Activated CD4-positive, alpha-beta memory T cell treated with anti-CD3 and anti-CD28 coated beads, Interleukin-2, amount 10 ng/mL, durations not matched to agents 7 days and 5 days (primary cell): ENCODE measurements at regions of chr22 and their contacts with region 1.

Region 1: GRCh38 chr22:42614312-42615091 is at the start of gene POLDIP3:
- DNase-seq: peak; percentile 99
- H3K4me3 Mint-ChIP-seq: peak within 1 kb of the TSS; percentile 92
- H3K27ac Mint-ChIP-seq: peak within 1 kb of the TSS; percentile 98
- H3K4me1 Mint-ChIP-seq: peaks cover 56% of the 10 kb centered on the region
- H3K27me3 Mint-ChIP-seq: no peaks in the 10 kb centered on the region
- total RNA-seq, gene POLDIP3: 71.4 to 74.7 TPM

Region 2: GRCh38 chr22:42533638-42533977 is 80.9 kb before region 1 on chr22:
- CTCF ChIA-PET with region 1: no interaction called
- POLR2A ChIA-PET with region 1: interaction called, 14 read pairs
- DNase-seq: no peak
- H3K4me3 Mint-ChIP-seq: peak overlapping the region; percentile 77
- H3K27ac Mint-ChIP-seq: peak overlapping the region; percentile 93
- H3K4me1 Mint-ChIP-seq: peaks cover 42% of the 10 kb centered on the region
- H3K27me3 Mint-ChIP-seq: peaks cover 1% of the 10 kb centered on the region

Region 3: DNA sequence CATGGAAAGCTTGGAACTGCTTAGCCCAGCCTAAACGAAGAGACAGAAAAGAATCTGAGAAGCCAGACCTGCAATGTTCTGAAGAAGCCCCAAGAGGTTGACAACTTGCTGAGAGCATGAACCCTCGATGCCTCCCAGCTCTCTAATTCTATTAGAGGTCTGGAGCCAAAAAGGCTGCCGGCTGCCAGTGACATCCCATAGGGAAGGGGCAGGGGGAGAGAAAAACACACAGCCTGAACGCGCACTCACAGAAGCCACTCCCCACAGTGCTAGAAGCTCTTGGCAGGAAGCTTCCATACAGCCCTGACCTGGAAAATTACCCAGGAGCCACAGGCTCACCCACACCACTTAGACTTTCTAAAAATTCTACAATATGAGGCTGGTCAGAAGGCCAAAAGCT is 18.2 kb before region 1 on chr22:
- CTCF ChIA-PET with region 1: no interaction called
- POLR2A ChIA-PET with region 1: interaction called, 15 read pairs
- DNase-seq: no peak
- H3K4me3 Mint-ChIP-seq: no peak overlapping the region
- H3K27ac Mint-ChIP-seq: no peak overlapping the region
- H3K4me1 Mint-ChIP-seq: no peaks in the 10 kb centered on the region
- H3K27me3 Mint-ChIP-seq: no peaks in the 10 kb centered on the region

Region 4: GRCh38 chr22:42630236-42630929 is 15.9 kb after region 1 on chr22:
- CTCF ChIA-PET with region 1: interaction called, 3 read pairs
- POLR2A ChIA-PET with region 1: interaction called, 63 read pairs
- DNase-seq: no peak
- H3K4me3 Mint-ChIP-seq: no peak overlapping the region
- H3K27ac Mint-ChIP-seq: no peak overlapping the region
- H3K4me1 Mint-ChIP-seq: no peaks in the 10 kb centered on the region
- H3K27me3 Mint-ChIP-seq: no peaks in the 10 kb centered on the region

Region 5: GRCh38 chr22:42649246-42650099 is 35.0 kb after region 1 on chr22 and contains the start of gene CYB5R3:
- CTCF ChIA-PET with region 1: no interaction called
- POLR2A ChIA-PET with region 1: interaction called, 79 read pairs
- DNase-seq: peak; percentile 81
- H3K4me3 Mint-ChIP-seq: peak within 1 kb of the TSS; percentile 100
- H3K27ac Mint-ChIP-seq: peak within 1 kb of the TSS; percentile 99
- H3K4me1 Mint-ChIP-seq: peaks cover 29% of the 10 kb centered on the region
- H3K27me3 Mint-ChIP-seq: no peaks in the 10 kb centered on the region
- total RNA-seq, gene CYB5R3: 68.4 to 74.3 TPM

Region 6: GRCh38 chr22:43090130-43090789 is 475.8 kb after region 1 on chr22:
- CTCF ChIA-PET with region 1: no interaction called
- POLR2A ChIA-PET with region 1: interaction called, 10 read pairs
- DNase-seq: peak; percentile 63
- H3K4me3 Mint-ChIP-seq: peak overlapping the region; percentile 55
- H3K27ac Mint-ChIP-seq: peak overlapping the region; percentile 62
- H3K4me1 Mint-ChIP-seq: peaks cover 27% of the 10 kb centered on the region
- H3K27me3 Mint-ChIP-seq: no peaks in the 10 kb centered on the region